Posterior cingulate gyrus (tissue), 11 donors: ENCODE measurements at regions of chr15 and their contacts with region 1.

Region 1: DNA sequence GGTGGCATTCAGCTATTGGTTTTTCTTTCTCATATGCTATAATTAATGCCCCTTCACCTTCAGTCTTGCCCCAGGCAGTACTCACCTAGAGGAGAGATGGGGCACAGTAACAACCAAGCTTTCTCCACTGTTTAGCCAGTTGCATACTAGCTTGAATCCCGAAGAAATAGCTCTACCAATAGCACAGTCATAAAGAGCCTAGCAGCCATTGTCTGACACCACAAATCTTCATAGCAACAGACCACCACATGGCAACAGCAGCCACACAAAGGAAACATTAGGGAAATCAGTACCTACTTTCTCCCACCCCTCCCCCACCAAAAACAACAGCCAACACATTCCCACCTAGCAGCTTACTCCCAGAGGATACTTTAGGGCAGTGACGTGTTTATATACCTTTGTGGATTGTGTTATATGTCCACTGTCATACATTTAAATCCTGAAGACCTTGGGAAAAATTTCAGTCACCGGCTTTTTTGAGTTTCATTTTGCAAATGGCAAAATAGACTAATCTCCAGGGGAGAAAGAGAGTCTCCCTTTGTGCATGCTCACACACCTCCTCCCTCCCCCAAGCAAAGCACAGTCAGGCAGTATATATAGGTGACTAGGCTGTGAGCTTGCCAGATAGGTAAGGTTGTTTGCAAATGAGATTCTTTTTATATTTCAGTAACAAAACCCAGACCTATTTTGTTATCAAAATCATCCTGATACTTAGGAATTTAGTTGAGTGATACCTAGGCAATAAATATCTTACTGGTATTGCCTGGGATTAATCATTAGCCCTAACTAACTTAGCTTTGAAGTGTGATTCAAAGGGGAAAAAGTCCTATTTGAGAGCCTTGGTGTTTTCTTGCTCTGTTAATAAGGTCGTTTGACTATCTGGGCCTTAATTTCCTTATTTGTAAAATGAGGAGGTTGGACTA is 140.6 kb downstream of the RBPMS2 start:
- DNase-seq: no peak

Region 2: DNA sequence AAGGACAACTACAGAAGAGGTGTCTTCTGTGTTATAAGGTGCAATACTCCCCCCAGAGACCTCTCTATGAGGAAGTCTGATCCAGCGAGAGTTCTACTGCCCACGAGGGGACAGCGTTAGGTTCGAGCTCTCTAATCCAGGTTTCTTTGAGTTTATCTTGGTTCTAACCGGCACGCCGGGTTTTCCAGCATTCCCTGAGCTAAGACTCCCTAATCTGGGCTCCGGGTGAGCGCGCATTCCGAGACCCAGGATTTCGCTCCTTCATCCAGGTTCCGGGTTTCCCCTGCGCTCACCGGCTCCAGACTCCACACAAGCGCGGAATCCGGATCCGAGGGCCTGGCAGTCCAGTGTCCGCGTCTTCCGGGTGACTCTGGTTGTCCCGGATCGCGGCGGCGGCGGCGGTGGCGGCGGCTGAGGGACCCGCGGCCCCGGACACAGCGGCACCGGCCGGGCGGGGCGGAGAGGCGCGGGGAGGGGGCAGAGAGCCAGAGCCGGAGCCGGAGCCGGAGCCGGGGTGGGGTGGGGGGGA is 174.6 kb before region 1 on chr15 and contains the start of gene ZNF609:
- intact Hi-C with region 1: loop called (anchors 10 kb)
- DNase-seq: peak; percentile 85 to 98 (median 92)